ENCODE measurements at regions of chr20 and their contacts with region 1.

Region 1: DNA sequence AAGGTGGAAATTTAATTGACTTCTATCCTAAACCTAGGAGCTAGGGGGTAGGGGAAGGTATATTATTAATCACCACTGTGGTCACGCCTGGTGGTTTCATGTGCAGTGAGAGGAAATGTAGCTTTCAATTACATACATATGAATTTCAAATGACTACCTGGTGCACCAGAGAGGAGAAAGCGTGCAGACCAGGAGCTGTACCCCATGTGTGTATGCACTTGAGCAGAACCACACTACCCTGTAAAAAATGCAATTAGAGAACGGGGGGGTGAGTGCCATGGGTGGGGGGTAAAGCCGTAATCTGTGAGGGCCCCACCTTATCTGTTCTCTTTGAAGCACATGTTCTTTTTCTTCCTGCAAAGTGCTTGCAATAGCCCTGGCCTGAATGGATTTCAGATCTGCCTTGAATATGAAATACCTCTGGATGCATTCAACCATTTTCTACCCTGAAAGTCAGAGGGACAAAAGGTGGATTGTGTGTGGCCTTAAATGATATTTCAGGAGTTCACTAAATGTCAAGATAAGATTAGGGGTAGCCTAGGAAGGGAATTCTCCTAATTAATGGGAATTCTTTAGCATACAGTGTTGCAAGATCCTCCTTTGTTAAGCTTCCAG is 30.9 kb upstream of the EDN3 start:
- DNase-seq: no peak
- ATAC-seq: no peak
- H3K4me3 ChIP-seq: no peak overlapping the region
- H3K27ac ChIP-seq: no peak overlapping the region
- H3K4me1 ChIP-seq: no peaks in the 10 kb centered on the region
- H3K27me3 ChIP-seq: peaks cover 0 to 79% (median 23%) of the 10 kb centered on the region in 9 donors
- CTCF ChIP-seq: no peak
- POLR2A ChIP-seq: no peak

Region 2: DNA sequence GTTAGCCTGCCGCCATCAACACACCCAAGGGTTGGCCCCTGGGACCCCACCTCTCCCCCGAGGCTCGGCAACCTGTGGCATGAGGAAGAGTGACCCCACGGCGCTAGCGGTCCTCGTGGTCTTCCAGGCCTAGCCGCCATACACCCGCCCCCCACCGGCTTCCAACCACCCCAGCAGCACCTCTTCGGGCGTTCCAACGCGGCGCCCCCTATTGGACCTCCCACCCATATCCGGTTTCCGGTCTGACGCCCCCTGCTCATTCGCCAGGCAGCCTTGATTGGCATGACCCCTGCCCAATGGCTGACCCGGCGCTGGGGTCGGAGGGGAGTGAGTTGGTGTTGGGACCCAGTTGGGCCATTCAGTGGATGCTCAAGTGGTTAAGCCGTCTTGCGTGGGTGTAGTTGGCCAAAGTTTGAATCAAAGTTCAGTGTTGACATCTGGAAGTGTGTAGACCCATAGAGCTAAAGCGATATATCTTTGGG is 418.8 kb before region 1 on chr20 and contains the start of gene GNAS-AS1:
- intact Hi-C with region 1: no loop called
- DNase-seq: peak; percentile 83 to 91 (median 88)
- ATAC-seq: peak; percentile 79 to 91 (median 88)
- H3K4me3 ChIP-seq: peak within 1 kb of the TSS; percentile 15 to 78 (median 57)
- H3K27ac ChIP-seq: no peak within 1 kb of the TSS
- H3K4me1 ChIP-seq: peaks cover 0 to 27% (median 5%) of the 10 kb centered on the region in 12 donors
- H3K27me3 ChIP-seq: peaks cover 11 to 61% (median 26%) of the 10 kb centered on the region in 9 donors
- CTCF ChIP-seq: peak in 3 of 12 donors; percentile 15 to 23 (median 22)
- POLR2A ChIP-seq: no peak
- total RNA-seq, gene GNAS-AS1: 0.22 to 0.79 (median 0.29) TPM in 7 of 9 donors, not detected in the others

Region 3: DNA sequence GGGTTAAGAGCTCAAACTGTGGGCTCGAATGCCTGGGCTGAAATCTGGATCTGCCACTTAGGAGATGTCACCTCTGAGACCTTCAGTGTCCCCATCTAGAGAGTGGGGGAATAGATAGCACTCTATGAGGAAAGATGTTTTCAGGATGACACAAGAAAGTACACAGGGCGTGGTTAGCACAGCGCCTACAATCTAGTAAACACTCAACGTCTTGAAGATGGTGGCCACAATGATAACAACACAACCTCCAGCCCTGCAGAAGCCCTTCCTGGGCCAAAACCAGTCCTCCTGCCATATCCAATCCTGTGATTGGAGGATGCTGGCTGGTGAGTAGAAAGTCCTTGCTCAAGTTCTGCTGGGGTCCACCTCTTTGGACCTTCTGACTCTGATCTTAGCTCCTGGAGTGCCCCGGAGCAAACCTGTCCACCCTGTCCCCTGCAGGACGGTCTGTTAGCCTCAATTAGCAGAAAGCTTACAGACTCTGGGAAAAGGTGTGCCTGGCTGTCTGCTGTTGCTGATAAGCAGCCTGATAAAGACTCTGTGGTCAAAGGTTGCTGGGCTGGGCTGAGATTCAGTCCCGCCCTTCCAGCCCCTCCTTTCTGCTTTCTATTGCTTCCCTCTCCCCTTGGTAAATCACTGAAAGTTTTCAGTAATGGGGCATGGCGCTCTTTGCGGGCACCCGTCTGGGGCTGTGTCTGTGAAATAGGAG is 39.1 kb after region 1 on chr20:
- intact Hi-C with region 1: no loop called
- DNase-seq: no peak
- ATAC-seq: no peak
- H3K4me3 ChIP-seq: no peak overlapping the region
- H3K27ac ChIP-seq: no peak overlapping the region
- H3K4me1 ChIP-seq: no peaks in the 10 kb centered on the region
- H3K27me3 ChIP-seq: peaks cover 0 to 36% (median 11%) of the 10 kb centered on the region in 9 donors
- CTCF ChIP-seq: no peak
- POLR2A ChIP-seq: no peak

Region 4: GRCh38 chr20:59371431-59371830 is 101.9 kb after region 1 on chr20:
- intact Hi-C with region 1: loop called in 1 of 10 experiments (anchors 10 kb)
- DNase-seq: no peak
- ATAC-seq: no peak
- H3K4me3 ChIP-seq: no peak overlapping the region
- H3K27ac ChIP-seq: no peak overlapping the region
- H3K4me1 ChIP-seq: no peaks in the 10 kb centered on the region
- H3K27me3 ChIP-seq: peaks cover 0 to 33% (median 0%) of the 10 kb centered on the region in 9 donors
- CTCF ChIP-seq: no peak
- POLR2A ChIP-seq: no peak

Measured in heart left ventricle (tissue), 16 donors.